ENCODE measurements at regions of chr7 and their contacts with region 1.

Region 1: GRCh38 chr7:151315038-151315655 is 26.5 kb upstream of the NUB1 start:
- DNase-seq: peak; percentile 38
- ATAC-seq: peak; percentile 78
- H3K4me3 ChIP-seq: no peak overlapping the region
- H3K27ac ChIP-seq: no peak overlapping the region
- H3K4me1 ChIP-seq: peaks cover 6% of the 10 kb centered on the region; the same call in 1 of the 2 replicates
- H3K27me3 ChIP-seq: peaks cover 1 to 4% of the 10 kb centered on the region in 2 experiments; a peak in 1 of 5 replicates
- CTCF ChIP-seq: peak; percentile 76
- EP300 ChIP-seq: no peak
- POLR2A ChIP-seq: no peak
- RAD21 ChIP-seq: peak; percentile 66; the same call in 1 of the 2 replicates

Region 2: GRCh38 chr7:151351027-151351426 is 35.9 kb after region 1 on chr7:
- CTCF ChIA-PET with region 1: interaction called, 60 read pairs
- POLR2A ChIA-PET with region 1: interaction called, 3 read pairs
- in situ Hi-C with region 1: loop called (anchors 5 kb)
- intact Hi-C with region 1: loop called (anchors 1 kb)
- DNase-seq: no peak
- ATAC-seq: peak; percentile 70
- H3K4me3 ChIP-seq: no peak overlapping the region
- H3K27ac ChIP-seq: no peak overlapping the region
- H3K4me1 ChIP-seq: peaks cover 19% of the 10 kb centered on the region
- H3K27me3 ChIP-seq: no peaks in the 10 kb centered on the region
- CTCF ChIP-seq: peak; percentile 54
- EP300 ChIP-seq: no peak
- POLR2A ChIP-seq: no peak
- RAD21 ChIP-seq: no peak

Region 3: GRCh38 chr7:151853896-151854719 is 539.0 kb after region 1 on chr7:
- CTCF ChIA-PET with region 1: no interaction called
- POLR2A ChIA-PET with region 1: no interaction called
- in situ Hi-C with region 1: no loop called
- intact Hi-C with region 1: no loop called
- DNase-seq: no peak
- ATAC-seq: peak; percentile 25
- H3K4me3 ChIP-seq: no peak overlapping the region
- H3K27ac ChIP-seq: no peak overlapping the region
- H3K4me1 ChIP-seq: no peaks in the 10 kb centered on the region
- H3K27me3 ChIP-seq: peaks cover 2 to 12% of the 10 kb centered on the region in 2 experiments; a peak in 4 of 5 replicates
- CTCF ChIP-seq: no peak
- EP300 ChIP-seq: no peak
- POLR2A ChIP-seq: no peak
- RAD21 ChIP-seq: no peak

Measured in HepG2 (cell line).